K562 (cell line): ENCODE measurements at regions of chr1 and their contacts with region 1.

Region 1: GRCh38 chr1:23777979-23778814 is at the start of gene PITHD1:
- DNase-seq: peak; percentile 96 to 99 (median 98)
- ATAC-seq: peak; percentile 88
- H3K4me3 ChIP-seq: peak within 1 kb of the TSS; percentile 78
- H3K27ac ChIP-seq: peak within 1 kb of the TSS; percentile 97
- H3K4me1 ChIP-seq: peaks cover 12 to 42% of the 10 kb centered on the region in 2 experiments; a peak in 3 of 5 replicates
- H3K27me3 ChIP-seq: no peaks in the 10 kb centered on the region
- CTCF ChIP-seq: peak in 1 of 3 experiments; percentile 2; a peak in 1 of 6 replicates
- EP300 ChIP-seq: peak; percentile 94
- POLR2A ChIP-seq: peak; percentile 98
- RAD21 ChIP-seq: 0 out of 4 replicates have a peak, but pooled peaks of 1 of the 2 experiments have one; percentile 11
- polyA plus RNA-seq, gene PITHD1: 46.5 to 51.7 TPM

Region 2: GRCh38 chr1:23422241-23423030 is 355.8 kb before region 1 on chr1:
- CTCF ChIA-PET with region 1: no interaction called
- POLR2A ChIA-PET with region 1: no interaction called
- in situ Hi-C with region 1: no loop called
- intact Hi-C with region 1: no loop called
- DNase-seq: peak; percentile 76 to 82 (median 77)
- ATAC-seq: peak; percentile 85
- H3K4me3 ChIP-seq: no peak overlapping the region
- H3K27ac ChIP-seq: peak overlapping the region; percentile 60
- H3K4me1 ChIP-seq: peaks cover 22 to 31% of the 10 kb centered on the region in 2 experiments
- H3K27me3 ChIP-seq: no peaks in the 10 kb centered on the region
- CTCF ChIP-seq: no peak
- EP300 ChIP-seq: no peak
- POLR2A ChIP-seq: peak; percentile 55
- RAD21 ChIP-seq: no peak

Region 3: DNA sequence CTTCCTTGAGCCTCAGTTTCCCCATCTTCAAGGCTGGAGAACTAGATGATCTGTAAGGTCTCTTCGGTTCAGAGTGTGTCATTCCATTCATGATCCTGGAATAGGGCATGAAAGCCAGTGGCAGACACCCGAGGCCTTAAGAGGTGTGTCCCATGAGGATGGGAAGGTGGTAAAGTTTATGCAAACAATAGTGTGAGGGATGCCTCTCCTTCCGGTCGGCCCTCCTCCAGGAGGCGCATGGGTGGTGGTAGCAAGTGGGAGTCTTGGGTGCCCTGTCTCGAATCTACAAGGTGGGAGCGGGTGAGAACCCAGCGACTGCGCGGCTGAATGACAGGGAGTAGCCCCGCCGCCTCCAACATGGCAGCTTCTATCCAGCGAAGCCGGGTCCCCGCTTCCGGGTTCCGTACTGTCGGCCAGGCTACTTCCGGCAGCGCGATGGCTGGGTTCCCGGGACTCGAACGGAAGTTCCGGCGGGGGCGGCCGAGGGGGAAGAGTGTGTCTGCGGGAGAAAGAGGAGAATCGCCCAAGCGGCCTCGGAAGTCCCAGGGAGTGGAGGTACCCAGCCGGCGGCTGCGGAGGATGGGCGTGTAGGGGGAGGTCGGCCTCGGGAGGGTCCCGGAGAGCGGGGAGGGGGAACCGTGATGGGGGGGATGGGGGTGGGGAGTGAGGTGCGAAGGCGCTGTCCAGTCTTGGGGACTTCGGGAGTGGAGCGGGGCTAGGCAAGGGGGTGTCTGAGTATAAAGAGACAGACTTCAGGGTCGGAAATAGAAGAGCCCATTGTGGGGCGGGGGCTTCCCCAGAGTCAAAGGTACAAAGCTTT is 12.7 kb after region 1 on chr1 and contains the start of gene LYPLA2:
- CTCF ChIA-PET with region 1: no interaction called
- POLR2A ChIA-PET with region 1: interaction called, 197 read pairs
- in situ Hi-C with region 1: no loop called
- intact Hi-C with region 1: no loop called
- DNase-seq: peak; percentile 85 to 98 (median 90)
- ATAC-seq: peak; percentile 92
- H3K4me3 ChIP-seq: peak within 1 kb of the TSS; percentile 58
- H3K27ac ChIP-seq: peak within 1 kb of the TSS; percentile 90
- H3K4me1 ChIP-seq: peaks cover 31 to 49% of the 10 kb centered on the region in 2 experiments
- H3K27me3 ChIP-seq: no peaks in the 10 kb centered on the region
- CTCF ChIP-seq: no peak
- EP300 ChIP-seq: peak; percentile 23; the same call in 1 of the 2 replicates
- POLR2A ChIP-seq: peak; percentile 78
- RAD21 ChIP-seq: no peak
- polyA plus RNA-seq, gene LYPLA2: 3.9 to 9.9 TPM

Region 4: GRCh38 chr1:23800400-23801337 is 22.5 kb after region 1 on chr1 and contains the start of gene GALE:
- CTCF ChIA-PET with region 1: no interaction called
- POLR2A ChIA-PET with region 1: interaction called, 197 read pairs
- in situ Hi-C with region 1: no loop called
- intact Hi-C with region 1: loop called (anchors 1 kb)
- DNase-seq: peak; percentile 96 to 100 (median 97)
- ATAC-seq: peak; percentile 90
- H3K4me3 ChIP-seq: peak within 1 kb of the TSS; percentile 80
- H3K27ac ChIP-seq: peak within 1 kb of the TSS; percentile 74
- H3K4me1 ChIP-seq: peaks cover 21 to 40% of the 10 kb centered on the region in 2 experiments
- H3K27me3 ChIP-seq: no peaks in the 10 kb centered on the region
- CTCF ChIP-seq: no peak
- EP300 ChIP-seq: peak; percentile 63; the same call in 1 of the 2 replicates
- POLR2A ChIP-seq: peak; percentile 89
- RAD21 ChIP-seq: no peak
- polyA plus RNA-seq, gene GALE: 8.4 to 48.4 TPM

Region 5: DNA sequence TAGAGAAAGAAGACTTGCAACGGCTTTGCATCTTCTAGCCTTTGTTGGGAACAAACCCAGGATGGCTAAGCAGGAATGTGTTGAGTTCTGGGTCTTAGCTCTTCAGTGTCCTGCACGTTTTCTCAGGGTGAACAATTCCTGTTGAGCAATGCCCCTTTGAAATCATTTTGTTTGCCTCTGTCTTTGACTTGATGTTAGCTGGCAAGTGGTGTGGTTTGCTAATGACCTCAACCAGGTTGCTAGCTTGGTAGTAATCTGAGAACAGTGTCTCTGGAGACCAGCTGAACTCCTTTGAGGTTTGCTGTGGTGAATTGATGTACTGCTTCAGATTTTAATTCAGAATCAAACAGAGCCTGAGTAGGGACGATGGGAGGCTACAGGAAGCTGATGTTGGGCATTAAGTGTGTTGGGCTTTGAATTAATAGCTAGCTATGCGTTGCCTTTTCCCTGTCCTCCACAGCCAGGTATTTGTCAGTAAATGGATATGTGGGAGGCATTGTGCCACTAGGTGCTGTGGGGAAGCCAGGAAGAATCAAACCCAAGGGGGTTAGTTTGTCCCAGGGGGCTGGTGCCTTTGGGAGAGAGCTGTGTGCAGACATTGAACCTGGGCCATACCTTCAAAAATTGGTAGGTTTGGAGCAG is 225.3 kb after region 1 on chr1:
- CTCF ChIA-PET with region 1: no interaction called
- POLR2A ChIA-PET with region 1: no interaction called
- in situ Hi-C with region 1: no loop called
- intact Hi-C with region 1: no loop called
- DNase-seq: no peak
- ATAC-seq: no peak
- H3K4me3 ChIP-seq: no peak overlapping the region
- H3K27ac ChIP-seq: no peak overlapping the region
- H3K4me1 ChIP-seq: no peaks in the 10 kb centered on the region
- H3K27me3 ChIP-seq: peaks cover 26 to 37% of the 10 kb centered on the region in 2 experiments
- CTCF ChIP-seq: no peak
- EP300 ChIP-seq: no peak
- POLR2A ChIP-seq: no peak
- RAD21 ChIP-seq: no peak